Esophagus muscularis mucosa (tissue), 4 donors: ENCODE measurements at regions of chr7 and their contacts with region 1.

Region 1: GRCh38 chr7:35985126-35985754 is 167.8 kb upstream of the EEPD1 start:
- DNase-seq: no peak
- H3K4me3 ChIP-seq: no peak overlapping the region
- H3K27ac ChIP-seq: no peak overlapping the region
- H3K4me1 ChIP-seq: peaks cover 0 to 35% (median 24%) of the 10 kb centered on the region in 4 donors
- H3K27me3 ChIP-seq: no peaks in the 10 kb centered on the region
- CTCF ChIP-seq: peak; percentile 92 to 96 (median 94)
- EP300 ChIP-seq: no peak
- POLR2A ChIP-seq: no peak

Region 2: DNA sequence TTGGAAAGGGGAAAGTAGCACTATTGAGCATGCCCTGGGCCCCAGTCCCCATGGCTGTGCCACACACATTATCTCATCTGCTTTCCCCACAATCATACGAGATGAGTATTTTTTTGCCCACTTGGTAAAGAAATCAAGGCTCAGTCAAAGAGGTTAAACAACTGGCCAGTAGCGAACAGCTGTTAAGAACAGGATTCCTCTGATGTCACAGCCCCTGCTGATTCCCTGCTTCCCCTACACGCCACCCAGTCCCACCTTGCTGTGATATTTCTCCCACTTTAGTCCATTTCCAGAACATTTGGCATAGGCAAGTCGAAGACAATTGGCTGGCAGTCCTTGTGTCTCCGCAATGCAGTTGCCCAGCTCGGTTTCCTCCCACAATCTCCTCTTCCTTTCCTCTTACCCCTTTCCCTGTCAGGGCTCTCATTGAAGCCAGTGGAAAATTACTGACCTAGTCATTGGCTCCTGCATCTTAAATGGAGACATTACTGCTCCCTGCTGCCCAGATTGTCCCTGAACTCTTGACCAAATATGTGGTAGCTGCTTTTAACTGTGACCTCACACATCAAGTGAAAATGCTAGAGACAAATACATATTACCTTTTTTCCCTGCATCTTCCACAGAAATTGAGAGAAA is 111.3 kb after region 1 on chr7:
- intact Hi-C with region 1: loop called (anchors 10 kb)
- DNase-seq: no peak
- H3K4me3 ChIP-seq: no peak overlapping the region
- H3K27ac ChIP-seq: no peak overlapping the region
- H3K4me1 ChIP-seq: peaks cover 0 to 6% (median 0%) of the 10 kb centered on the region in 4 donors
- H3K27me3 ChIP-seq: no peaks in the 10 kb centered on the region
- CTCF ChIP-seq: no peak
- EP300 ChIP-seq: no peak
- POLR2A ChIP-seq: no peak

Region 3: GRCh38 chr7:36736899-36737211 is 751.6 kb after region 1 on chr7:
- intact Hi-C with region 1: no loop called
- DNase-seq: no peak
- H3K4me3 ChIP-seq: no peak overlapping the region
- H3K27ac ChIP-seq: peak overlapping the region in 2 of 4 donors; percentile 3 to 11
- H3K4me1 ChIP-seq: peaks cover 0 to 9% (median 0%) of the 10 kb centered on the region in 4 donors
- H3K27me3 ChIP-seq: no peaks in the 10 kb centered on the region
- CTCF ChIP-seq: no peak
- EP300 ChIP-seq: no peak
- POLR2A ChIP-seq: no peak